GM10248 (cell line): ENCODE measurements at regions of chr1 and their contacts with region 1.

Region 1: DNA sequence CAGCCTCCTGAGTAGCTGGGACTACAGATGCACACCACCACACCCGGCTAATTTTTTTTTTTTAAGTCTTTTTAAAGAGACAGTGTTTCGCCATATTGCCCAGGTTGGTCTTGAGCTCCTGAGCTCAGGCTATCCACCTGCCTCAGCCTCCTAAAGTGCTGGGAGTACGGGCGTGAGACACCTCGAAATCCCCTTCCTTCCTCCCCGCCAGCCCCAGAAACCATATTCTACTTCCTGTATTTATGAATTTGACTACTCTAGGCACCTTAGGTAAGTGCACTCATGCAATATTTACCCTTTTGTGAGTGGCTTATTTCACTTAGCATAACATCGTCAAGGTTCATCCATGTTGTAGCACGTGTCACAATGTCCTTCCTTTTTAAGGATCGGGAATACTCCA is 6.9 kb upstream of the LRP8 start:
- DNase-seq: peak; percentile 23
- CTCF ChIP-seq: no peak

Region 2: DNA sequence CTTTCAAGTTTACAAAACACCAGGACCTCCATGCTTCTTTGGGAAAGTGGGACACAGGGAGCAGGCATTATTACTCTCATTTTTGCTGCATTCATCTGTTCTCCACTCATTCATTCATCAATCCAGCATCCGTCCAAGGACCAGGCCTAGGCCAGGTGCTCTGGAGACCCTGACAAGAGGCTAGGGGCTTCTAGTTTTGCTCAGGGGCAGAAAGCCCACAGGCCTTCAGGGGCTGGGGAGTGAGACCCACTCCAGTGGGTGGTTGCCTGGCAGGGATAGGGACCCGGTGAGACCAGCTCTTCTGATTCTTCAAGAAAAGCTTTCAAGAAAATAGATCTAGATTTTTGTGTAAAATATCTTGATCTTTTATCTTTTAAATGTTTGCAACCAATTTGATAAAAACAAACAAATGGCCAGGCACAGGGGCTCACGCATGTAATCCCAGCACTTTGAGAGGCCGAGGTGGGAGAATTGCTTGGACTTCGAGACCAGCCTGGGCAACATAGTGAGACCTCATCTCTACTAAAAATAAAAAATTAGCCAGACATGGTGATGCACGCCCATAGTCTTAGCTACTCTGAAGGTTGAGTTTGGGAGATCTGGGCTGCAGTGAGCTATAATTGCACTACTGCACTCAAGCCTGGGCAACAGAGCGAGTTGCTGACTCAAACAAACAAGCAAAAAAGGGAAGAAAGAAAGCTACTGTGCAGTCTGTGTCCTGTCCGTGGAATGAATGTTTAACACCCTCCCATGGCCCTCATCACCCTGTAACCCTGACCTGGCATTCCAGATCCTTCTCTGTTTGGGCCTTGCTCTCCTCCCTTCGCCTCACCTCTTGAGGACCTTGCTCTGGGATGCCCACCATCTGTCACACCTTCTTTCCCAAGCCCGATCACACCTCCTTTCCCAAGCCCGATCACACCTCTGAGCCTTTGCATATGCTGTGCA is 10.4 kb after region 1 on chr1:
- CTCF ChIA-PET with region 1: interaction called, 13 read pairs
- POLR2A ChIA-PET with region 1: no interaction called
- DNase-seq: peak; percentile 71
- CTCF ChIP-seq: no peak